Activated CD4-positive, alpha-beta memory T cell treated with anti-CD3 and anti-CD28 coated beads for 36 hours (primary cell): ENCODE measurements at regions of chr9 and their contacts with region 1.

Region 1: GRCh38 chr9:32571969-32572899 is 725 bp downstream of the NDUFB6 start:
- DNase-seq: peak; percentile 85
- H3K4me3 Mint-ChIP-seq: peak overlapping the region; percentile 98
- H3K27ac Mint-ChIP-seq: peak overlapping the region; percentile 95
- H3K4me1 Mint-ChIP-seq: peaks cover 27% of the 10 kb centered on the region
- H3K27me3 Mint-ChIP-seq: no peaks in the 10 kb centered on the region

Region 2: DNA sequence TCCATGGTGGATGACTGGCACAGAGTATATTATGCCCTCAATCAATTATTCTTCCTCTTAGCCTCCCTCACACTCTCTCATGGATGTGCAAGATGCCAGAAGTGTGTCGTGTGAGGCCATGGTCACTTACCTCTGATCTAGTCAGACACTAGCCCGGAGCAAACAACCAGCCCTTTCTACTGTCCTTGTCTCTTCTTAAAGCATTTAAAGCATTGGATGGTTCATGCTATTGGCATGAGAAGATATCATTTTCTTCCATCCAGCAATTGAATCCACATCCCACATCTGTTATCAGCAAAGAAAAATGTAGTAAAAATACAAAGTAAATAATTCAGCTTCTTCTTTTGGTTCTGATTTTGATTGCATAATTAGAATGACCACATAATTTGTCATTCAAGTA is 455.0 kb before region 1 on chr9:
- CTCF ChIA-PET with region 1: no interaction called
- POLR2A ChIA-PET with region 1: no interaction called
- intact Hi-C with region 1: no loop called
- DNase-seq: no peak
- H3K4me3 Mint-ChIP-seq: no peak overlapping the region
- H3K27ac Mint-ChIP-seq: no peak overlapping the region
- H3K4me1 Mint-ChIP-seq: no peaks in the 10 kb centered on the region
- H3K27me3 Mint-ChIP-seq: no peaks in the 10 kb centered on the region

Region 3: GRCh38 chr9:32384364-32385151 is 187.7 kb before region 1 on chr9 and contains the start of gene ACO1:
- CTCF ChIA-PET with region 1: interaction called, 502 read pairs
- POLR2A ChIA-PET with region 1: interaction called, 20 read pairs
- intact Hi-C with region 1: loop called (anchors 1 kb)
- DNase-seq: peak; percentile 87
- H3K4me3 Mint-ChIP-seq: peak within 1 kb of the TSS; percentile 79
- H3K27ac Mint-ChIP-seq: no peak within 1 kb of the TSS
- H3K4me1 Mint-ChIP-seq: peaks cover 15% of the 10 kb centered on the region
- H3K27me3 Mint-ChIP-seq: peaks cover 5% of the 10 kb centered on the region
- total RNA-seq, gene ACO1: 13.1 to 13.7 TPM

Region 4: GRCh38 chr9:32550562-32551433 is 21.4 kb before region 1 on chr9:
- CTCF ChIA-PET with region 1: interaction called, 62 read pairs
- POLR2A ChIA-PET with region 1: interaction called, 15 read pairs
- intact Hi-C with region 1: loop called (anchors 1 kb)
- DNase-seq: peak; percentile 95
- H3K4me3 Mint-ChIP-seq: peak overlapping the region; percentile 99
- H3K27ac Mint-ChIP-seq: peak overlapping the region; percentile 100
- H3K4me1 Mint-ChIP-seq: peaks cover 48% of the 10 kb centered on the region
- H3K27me3 Mint-ChIP-seq: no peaks in the 10 kb centered on the region

Region 5: DNA sequence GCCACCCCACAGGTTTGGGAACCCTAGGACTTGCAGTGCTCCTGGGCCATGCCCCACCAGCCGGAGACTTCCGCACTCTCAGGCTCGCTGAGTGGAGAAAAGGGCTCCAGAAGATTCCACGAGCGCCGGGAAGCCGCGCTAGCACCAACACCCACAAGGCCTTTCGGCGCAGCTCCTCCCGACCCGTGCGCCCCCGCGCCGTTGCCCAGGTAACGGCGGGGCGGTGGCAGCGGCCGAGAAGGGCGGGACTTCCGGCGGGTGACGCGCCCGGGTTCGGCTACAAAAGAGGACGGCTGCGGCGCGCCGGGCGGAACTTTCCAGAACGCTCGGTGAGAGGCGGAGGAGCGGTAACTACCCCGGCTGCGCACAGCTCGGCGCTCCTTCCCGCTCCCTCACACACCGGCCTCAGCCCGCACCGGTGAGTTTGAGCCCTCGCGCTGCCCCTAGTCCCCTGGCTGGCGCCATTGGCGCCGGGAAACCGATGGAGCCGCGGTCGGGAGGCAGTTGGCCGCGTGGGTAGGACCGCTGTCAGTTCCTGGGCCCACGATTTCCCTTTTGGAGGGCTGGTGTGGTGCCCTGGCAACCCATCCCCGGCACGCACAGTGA is 452.8 kb after region 1 on chr9 and contains the start of gene DNAJA1:
- CTCF ChIA-PET with region 1: no interaction called
- POLR2A ChIA-PET with region 1: no interaction called
- intact Hi-C with region 1: loop called (anchors 1 kb)
- DNase-seq: peak; percentile 96
- H3K4me3 Mint-ChIP-seq: peak within 1 kb of the TSS; percentile 98
- H3K27ac Mint-ChIP-seq: peak within 1 kb of the TSS; percentile 95
- H3K4me1 Mint-ChIP-seq: peaks cover 57% of the 10 kb centered on the region
- H3K27me3 Mint-ChIP-seq: no peaks in the 10 kb centered on the region
- total RNA-seq, gene DNAJA1: 173 to 184 TPM

Region 6: DNA sequence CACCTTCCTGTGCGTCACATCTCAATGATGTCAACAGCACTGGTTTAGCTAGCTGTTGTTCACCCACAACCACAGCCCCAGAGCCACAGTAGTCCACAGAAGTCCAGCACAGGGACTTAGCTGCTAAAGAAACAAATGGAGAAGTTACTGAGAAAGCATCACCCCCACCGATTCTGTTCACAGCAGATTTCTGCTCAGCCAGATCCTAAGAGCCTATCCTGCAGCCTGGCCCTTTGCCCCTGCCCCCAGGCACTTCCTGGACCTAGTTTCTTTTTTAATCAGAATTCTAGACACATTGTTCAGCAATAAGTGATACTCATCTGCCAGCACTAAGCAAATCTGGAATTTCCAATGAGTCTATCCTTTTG is 587.5 kb after region 1 on chr9:
- CTCF ChIA-PET with region 1: no interaction called
- POLR2A ChIA-PET with region 1: no interaction called
- intact Hi-C with region 1: loop called (anchors 5 kb)
- DNase-seq: peak; percentile 85
- H3K4me3 Mint-ChIP-seq: peak overlapping the region; percentile 66
- H3K27ac Mint-ChIP-seq: peak overlapping the region; percentile 97
- H3K4me1 Mint-ChIP-seq: peaks cover 94% of the 10 kb centered on the region
- H3K27me3 Mint-ChIP-seq: no peaks in the 10 kb centered on the region